Uterus (tissue), 4 donors: ENCODE measurements at regions of chr11 and their contacts with region 1.

Region 1: DNA sequence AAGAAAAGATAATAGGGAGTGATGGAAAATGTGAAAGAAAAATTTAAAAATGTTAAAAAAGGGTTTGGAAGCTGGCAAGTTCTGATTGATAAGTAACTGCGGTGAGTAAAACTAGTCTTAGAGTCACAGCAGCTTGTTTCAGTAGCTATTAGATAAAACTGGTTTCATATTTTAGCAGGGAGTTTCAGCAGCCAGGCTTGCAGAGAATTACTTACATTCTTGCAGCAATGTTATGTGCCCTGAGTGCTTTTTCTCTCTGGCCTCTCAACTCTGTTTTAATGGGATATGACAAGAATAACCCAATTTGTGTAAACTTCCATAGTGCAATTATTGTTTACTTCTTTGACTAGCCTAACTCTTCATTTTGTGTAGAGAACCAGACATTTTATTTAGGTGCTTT is 33.6 kb downstream of the PPME1 start:
- DNase-seq: no peak
- H3K4me3 ChIP-seq: no peak overlapping the region
- H3K27ac ChIP-seq: no peak overlapping the region
- H3K4me1 ChIP-seq: no peaks in the 10 kb centered on the region
- H3K27me3 ChIP-seq: no peaks in the 10 kb centered on the region
- CTCF ChIP-seq: no peak
- POLR2A ChIP-seq: no peak

Region 2: DNA sequence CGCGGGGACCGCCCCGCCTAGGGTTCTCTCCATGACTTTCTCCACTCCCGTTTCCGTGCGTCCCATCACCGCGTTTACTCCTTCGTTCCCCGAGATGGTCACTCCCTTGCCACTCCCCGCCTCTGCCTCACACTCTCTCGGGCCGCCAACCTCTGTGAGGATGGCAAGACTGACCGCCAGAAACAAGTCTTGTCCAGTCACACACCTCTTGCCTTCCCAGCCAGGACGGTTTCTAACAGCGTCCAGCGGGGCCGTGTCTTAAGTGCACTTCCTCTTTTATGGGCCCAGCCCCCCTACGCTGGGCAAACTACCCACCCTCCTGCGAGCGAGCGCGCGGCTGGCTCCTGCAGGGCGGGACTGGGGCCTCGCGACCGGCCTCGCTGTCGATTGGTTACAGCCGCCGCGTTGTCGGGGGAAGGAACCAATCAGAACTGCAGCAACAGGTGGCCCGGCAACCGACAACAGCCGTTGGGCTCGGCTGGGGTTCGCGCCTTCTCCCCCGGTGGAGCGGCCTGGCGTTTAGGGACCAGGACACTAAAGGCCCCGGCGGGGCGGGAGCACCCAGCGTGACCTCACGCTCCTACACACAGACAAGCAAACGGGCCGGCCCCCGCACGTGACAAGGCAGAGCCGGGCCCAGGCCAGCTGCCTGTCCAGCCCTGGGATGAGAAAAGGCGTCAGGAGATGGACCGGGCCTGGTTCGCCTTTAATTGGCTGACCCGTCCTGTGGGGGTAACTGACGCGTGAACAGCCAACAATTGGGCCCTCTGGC is 221.5 kb before region 1 on chr11:
- intact Hi-C with region 1: no loop called
- DNase-seq: peak; percentile 80 to 82
- H3K4me3 ChIP-seq: peak overlapping the region; percentile 47 to 59
- H3K27ac ChIP-seq: peak overlapping the region; percentile 63 to 86
- H3K4me1 ChIP-seq: peaks cover 0 to 6% of the 10 kb centered on the region in 2 donors
- H3K27me3 ChIP-seq: no peaks in the 10 kb centered on the region
- CTCF ChIP-seq: no peak
- POLR2A ChIP-seq: peak in 1 of 2 donors; percentile 49

Region 3: DNA sequence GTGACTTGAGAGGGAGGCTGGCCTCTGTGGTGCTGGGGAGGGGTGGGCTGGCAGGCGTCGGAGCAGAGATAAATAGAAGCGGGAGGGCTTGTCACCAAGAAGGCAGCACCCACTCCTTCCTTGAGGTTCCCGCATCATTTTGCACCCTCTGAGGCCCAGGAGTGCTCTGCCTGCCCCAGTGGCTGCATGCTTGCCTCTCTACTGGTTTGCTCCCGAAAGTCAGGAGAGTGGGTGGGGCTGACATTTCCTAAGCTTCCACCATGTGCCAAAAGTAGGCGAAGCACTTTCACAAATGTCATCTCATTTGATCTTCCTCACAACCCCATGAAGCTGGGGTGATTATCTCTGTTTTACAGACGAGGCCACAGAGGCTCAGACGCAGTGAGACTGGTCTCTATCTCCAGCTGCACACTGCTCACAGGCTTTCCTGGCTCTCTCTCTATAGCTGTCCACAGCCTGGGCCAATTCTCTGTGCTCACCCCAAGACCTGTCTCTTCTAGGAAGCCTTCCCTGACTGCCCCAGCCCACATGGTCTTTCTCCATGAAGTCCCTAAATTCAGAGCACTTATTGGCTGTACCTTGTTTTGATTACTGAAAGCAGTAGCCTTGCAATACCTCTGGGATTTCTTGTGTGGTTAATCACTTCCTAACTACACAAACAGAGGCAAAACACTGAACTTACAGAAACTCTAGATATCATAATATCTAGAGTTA is 193.2 kb before region 1 on chr11:
- intact Hi-C with region 1: no loop called
- DNase-seq: no peak
- H3K4me3 ChIP-seq: no peak overlapping the region
- H3K27ac ChIP-seq: no peak overlapping the region
- H3K4me1 ChIP-seq: no peaks in the 10 kb centered on the region
- H3K27me3 ChIP-seq: no peaks in the 10 kb centered on the region
- CTCF ChIP-seq: no peak
- POLR2A ChIP-seq: no peak

Region 4: DNA sequence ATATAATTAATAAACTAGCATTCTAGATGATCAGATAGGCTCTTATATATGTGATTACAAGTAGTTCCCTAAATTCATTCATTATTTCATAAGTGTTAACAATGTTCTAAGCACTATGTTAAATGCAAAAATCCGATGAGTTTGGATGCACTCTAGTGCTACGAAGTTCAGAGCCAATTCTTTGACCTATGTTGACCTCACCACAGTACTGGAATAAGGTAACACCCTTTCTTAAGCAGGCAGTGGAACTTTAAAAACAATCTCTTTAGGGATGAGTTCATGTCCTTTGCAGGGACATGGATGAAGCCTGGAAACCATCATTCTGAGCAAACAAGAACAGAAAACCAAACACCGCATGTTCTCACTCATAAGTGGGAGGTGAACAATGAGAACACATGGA is 127.5 kb before region 1 on chr11:
- intact Hi-C with region 1: loop called (anchors 5 kb)
- DNase-seq: no peak
- H3K4me3 ChIP-seq: no peak overlapping the region
- H3K27ac ChIP-seq: no peak overlapping the region
- H3K4me1 ChIP-seq: no peaks in the 10 kb centered on the region
- H3K27me3 ChIP-seq: no peaks in the 10 kb centered on the region
- CTCF ChIP-seq: no peak
- POLR2A ChIP-seq: no peak

Region 5: DNA sequence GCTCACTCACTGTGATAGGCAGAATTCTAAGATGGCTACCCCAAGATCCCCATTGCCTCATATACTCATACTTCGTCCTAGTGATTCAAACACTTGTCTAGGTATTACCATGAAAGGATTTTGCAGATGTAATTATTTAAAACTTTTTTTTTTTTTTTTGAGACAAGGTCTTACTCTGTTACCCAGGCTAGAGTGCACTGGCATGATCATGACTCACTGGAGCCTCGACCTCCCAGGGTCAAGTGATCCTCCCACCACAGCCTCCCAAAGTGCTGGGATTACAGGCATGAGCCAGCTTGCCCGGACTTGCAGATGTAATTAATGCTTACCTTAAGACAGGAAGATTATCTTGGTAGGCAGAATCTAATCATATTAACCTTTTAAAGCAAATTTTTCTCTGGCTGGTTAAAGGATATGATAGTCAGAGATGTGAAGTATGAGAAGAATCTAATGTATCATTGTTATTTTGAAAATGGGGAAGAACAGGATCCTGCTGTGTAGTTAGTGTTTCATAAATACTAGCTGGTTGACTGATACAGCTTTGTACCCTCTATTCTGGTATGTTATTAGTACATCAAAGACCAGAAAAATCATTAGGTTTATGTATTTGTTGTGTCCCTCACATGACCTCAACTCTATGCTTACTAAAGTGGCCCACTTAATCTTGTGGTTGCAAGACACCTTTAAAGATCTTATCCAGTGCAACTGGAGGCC is 69.4 kb before region 1 on chr11:
- intact Hi-C with region 1: no loop called
- DNase-seq: no peak
- H3K4me3 ChIP-seq: no peak overlapping the region
- H3K27ac ChIP-seq: no peak overlapping the region
- H3K4me1 ChIP-seq: no peaks in the 10 kb centered on the region
- H3K27me3 ChIP-seq: no peaks in the 10 kb centered on the region
- CTCF ChIP-seq: no peak
- POLR2A ChIP-seq: no peak

Region 6: GRCh38 chr11:75760710-75761493 is 1556.2 kb after region 1 on chr11:
- intact Hi-C with region 1: no loop called
- DNase-seq: no peak
- H3K4me3 ChIP-seq: no peak overlapping the region
- H3K27ac ChIP-seq: no peak overlapping the region
- H3K4me1 ChIP-seq: no peaks in the 10 kb centered on the region
- H3K27me3 ChIP-seq: no peaks in the 10 kb centered on the region
- CTCF ChIP-seq: no peak
- POLR2A ChIP-seq: no peak